ENCODE measurements at regions of chr6 and their contacts with region 1.

Region 1: DNA sequence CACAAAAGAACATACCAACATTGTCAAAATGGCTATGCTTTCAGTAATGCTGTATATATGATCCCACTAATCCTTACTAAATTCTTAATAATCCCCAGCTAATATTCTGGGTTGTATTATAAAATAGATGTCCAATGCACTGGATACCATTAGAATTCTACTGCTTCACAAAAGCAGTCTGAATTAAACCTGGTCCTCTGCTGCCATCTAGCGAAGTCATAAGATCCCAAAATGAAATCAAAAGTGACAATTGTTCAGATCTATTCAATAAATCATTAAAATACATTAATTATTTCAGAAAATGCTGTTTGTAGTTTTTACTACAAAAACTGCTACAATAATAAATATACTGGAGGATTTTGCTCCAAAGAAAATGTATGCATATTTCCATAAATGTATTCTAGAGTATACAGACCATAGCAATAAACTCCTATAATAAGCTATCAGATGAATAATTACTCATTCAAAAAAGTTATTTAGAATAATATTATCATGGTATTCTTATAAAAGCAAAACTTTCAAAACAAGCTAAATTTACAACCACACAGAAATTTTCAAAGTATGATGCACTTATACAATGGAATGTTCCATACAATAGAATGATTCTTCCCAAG is 92.6 kb downstream of the RNGTT start:
- DNase-seq: peak; percentile 70
- H3K4me3 ChIP-seq: no peak overlapping the region
- H3K27ac ChIP-seq: no peak overlapping the region
- H3K4me1 ChIP-seq: no peaks in the 10 kb centered on the region
- H3K27me3 ChIP-seq: no peaks in the 10 kb centered on the region
- CTCF ChIP-seq: peak; percentile 77

Region 2: DNA sequence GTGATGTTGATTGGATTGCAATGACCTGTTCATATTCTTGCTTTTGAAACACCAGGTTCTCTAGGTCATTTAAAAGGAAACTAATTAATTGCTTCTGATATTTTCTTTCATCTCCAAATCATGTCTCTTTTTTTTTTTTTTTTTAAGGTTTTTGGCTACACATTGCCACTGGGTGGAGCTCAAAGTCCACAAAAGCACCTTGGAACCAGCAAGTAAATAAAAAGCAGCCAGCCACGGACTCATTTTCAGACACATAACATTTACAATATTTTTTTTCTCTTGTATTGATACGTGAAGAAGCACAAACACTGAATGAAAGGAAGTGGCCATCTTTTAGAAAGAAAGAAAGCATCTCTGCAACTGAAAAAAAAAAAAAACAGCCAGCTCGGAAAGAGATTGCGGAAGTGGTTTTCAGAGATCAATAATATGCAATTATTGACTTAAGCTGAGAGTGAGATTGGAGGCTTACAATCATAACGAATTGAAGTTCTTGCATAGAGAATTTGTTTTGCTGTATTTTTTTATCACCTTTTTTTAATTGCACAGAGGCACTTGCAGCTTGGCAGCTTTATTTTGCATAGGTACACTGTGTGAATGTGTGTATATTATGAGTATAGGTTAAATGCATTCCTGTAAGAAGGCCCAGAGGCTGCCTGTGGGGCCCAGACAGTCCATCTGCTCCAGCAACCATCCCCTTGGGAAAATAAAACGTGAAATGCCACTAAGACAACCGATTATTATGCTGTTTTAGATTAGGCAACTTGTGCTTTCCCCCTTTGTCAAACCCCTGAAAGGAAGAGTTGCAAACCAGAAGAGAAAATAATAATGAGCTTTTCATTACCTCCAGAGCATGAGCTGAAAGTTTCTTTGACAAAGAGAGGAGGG is 1804.1 kb before region 1 on chr6:
- CTCF ChIA-PET with region 1: no interaction called
- POLR2A ChIA-PET with region 1: no interaction called
- intact Hi-C with region 1: loop called (anchors 5 kb)
- DNase-seq: peak; percentile 77
- H3K4me3 ChIP-seq: no peak overlapping the region
- H3K27ac ChIP-seq: no peak overlapping the region
- H3K4me1 ChIP-seq: no peaks in the 10 kb centered on the region
- H3K27me3 ChIP-seq: no peaks in the 10 kb centered on the region
- CTCF ChIP-seq: peak; percentile 76

Region 3: GRCh38 chr6:87139236-87139635 is 1731.6 kb before region 1 on chr6:
- CTCF ChIA-PET with region 1: no interaction called
- POLR2A ChIA-PET with region 1: no interaction called
- intact Hi-C with region 1: loop called (anchors 5 kb)
- DNase-seq: peak; percentile 71
- H3K4me3 ChIP-seq: no peak overlapping the region
- H3K27ac ChIP-seq: no peak overlapping the region
- H3K4me1 ChIP-seq: no peaks in the 10 kb centered on the region
- H3K27me3 ChIP-seq: peaks cover 4% of the 10 kb centered on the region
- CTCF ChIP-seq: peak; percentile 73

Region 4: DNA sequence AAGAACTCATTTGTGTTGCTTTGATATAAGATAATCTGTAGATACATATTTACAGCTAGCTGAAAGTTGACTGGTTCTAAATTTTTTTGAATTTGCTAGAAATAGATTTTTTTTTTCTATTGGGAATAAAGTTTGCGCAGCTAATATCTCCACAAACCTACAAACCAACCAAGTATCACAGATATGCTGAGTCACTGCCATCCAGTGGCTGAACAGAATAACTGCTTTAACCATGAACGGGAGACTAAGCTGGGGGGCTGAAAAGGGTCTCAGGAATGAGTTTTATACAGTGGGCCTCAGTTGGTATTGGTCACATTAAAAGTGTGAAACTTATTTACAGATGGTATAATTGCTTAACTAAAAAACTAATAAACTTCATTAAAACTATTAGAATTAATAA is 378.0 kb before region 1 on chr6:
- CTCF ChIA-PET with region 1: no interaction called
- POLR2A ChIA-PET with region 1: no interaction called
- intact Hi-C with region 1: loop called (anchors 10 kb)
- DNase-seq: peak; percentile 19
- H3K4me3 ChIP-seq: no peak overlapping the region
- H3K27ac ChIP-seq: no peak overlapping the region
- H3K4me1 ChIP-seq: no peaks in the 10 kb centered on the region
- H3K27me3 ChIP-seq: no peaks in the 10 kb centered on the region
- CTCF ChIP-seq: peak; percentile 54

Region 5: GRCh38 chr6:88989215-88989614 is 118.4 kb after region 1 on chr6:
- CTCF ChIA-PET with region 1: no interaction called
- POLR2A ChIA-PET with region 1: no interaction called
- intact Hi-C with region 1: no loop called
- DNase-seq: no peak
- H3K4me3 ChIP-seq: no peak overlapping the region
- H3K27ac ChIP-seq: no peak overlapping the region
- H3K4me1 ChIP-seq: no peaks in the 10 kb centered on the region
- H3K27me3 ChIP-seq: no peaks in the 10 kb centered on the region
- CTCF ChIP-seq: no peak

Region 6: DNA sequence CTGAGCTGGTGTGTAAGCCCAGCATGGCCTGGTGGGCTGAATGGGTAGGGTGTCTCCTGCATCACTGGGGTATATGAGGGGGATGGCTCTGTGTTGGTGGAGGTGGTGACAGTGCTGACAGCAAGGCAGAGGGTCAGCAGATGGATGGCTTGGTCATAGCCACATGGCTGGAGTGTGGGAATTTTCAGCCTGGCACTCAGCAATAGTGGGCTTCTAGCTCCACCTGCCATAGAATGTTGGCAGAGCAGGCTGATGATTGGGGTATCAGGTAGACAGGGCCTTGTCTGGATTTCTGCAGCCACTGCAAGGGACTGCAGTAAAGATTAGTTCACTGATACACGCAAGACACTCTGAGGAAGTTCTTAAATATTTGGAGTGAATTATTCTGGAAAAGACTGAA is 1563.3 kb after region 1 on chr6:
- CTCF ChIA-PET with region 1: no interaction called
- POLR2A ChIA-PET with region 1: no interaction called
- intact Hi-C with region 1: no loop called
- DNase-seq: no peak
- H3K4me3 ChIP-seq: no peak overlapping the region
- H3K27ac ChIP-seq: no peak overlapping the region
- H3K4me1 ChIP-seq: no peaks in the 10 kb centered on the region
- H3K27me3 ChIP-seq: peaks cover 7% of the 10 kb centered on the region
- CTCF ChIP-seq: peak; percentile 38; the same call in 1 of the 2 replicates